ENCODE measurements at regions of chr1 and their contacts with region 1.

Region 1: GRCh38 chr1:58921342-58921741 is 137.5 kb upstream of the JUN start:
- DNase-seq: no peak
- H3K4me3 ChIP-seq: no peak overlapping the region
- H3K27ac ChIP-seq: no peak overlapping the region
- H3K4me1 ChIP-seq: no peaks in the 10 kb centered on the region
- H3K27me3 ChIP-seq: no peaks in the 10 kb centered on the region
- CTCF ChIP-seq: no peak

Region 2: GRCh38 chr1:58755468-58755872 is 165.9 kb before region 1 on chr1:
- CTCF ChIA-PET with region 1: no interaction called
- POLR2A ChIA-PET with region 1: interaction called, 21 read pairs
- intact Hi-C with region 1: no loop called
- DNase-seq: peak; percentile 86
- H3K4me3 ChIP-seq: no peak overlapping the region
- H3K27ac ChIP-seq: no peak overlapping the region
- H3K4me1 ChIP-seq: peaks cover 9% of the 10 kb centered on the region
- H3K27me3 ChIP-seq: no peaks in the 10 kb centered on the region
- CTCF ChIP-seq: no peak

Region 3: GRCh38 chr1:58773406-58773840 is 147.9 kb before region 1 on chr1:
- CTCF ChIA-PET with region 1: no interaction called
- POLR2A ChIA-PET with region 1: no interaction called
- intact Hi-C with region 1: no loop called
- DNase-seq: peak; percentile 53
- H3K4me3 ChIP-seq: no peak overlapping the region
- H3K27ac ChIP-seq: no peak overlapping the region
- H3K4me1 ChIP-seq: peaks cover 11% of the 10 kb centered on the region
- H3K27me3 ChIP-seq: no peaks in the 10 kb centered on the region
- CTCF ChIP-seq: no peak

Measured in A673 (cell line).